Activated CD4-positive, alpha-beta T cell treated with anti-CD3 and anti-CD28 coated beads for 36 hours (primary cell): ENCODE measurements at regions of chr4 and their contacts with region 1.

Region 1: GRCh38 chr4:10116580-10117358 is at the start of gene WDR1:
- DNase-seq: peak; percentile 93
- ATAC-seq: peak; percentile 79
- H3K4me3 Mint-ChIP-seq: peak within 1 kb of the TSS; percentile 96
- H3K27ac Mint-ChIP-seq: peak within 1 kb of the TSS; percentile 100
- H3K4me1 Mint-ChIP-seq: peaks cover 73% of the 10 kb centered on the region
- H3K27me3 Mint-ChIP-seq: no peaks in the 10 kb centered on the region
- total RNA-seq, gene WDR1: 308 to 354 TPM

Region 2: DNA sequence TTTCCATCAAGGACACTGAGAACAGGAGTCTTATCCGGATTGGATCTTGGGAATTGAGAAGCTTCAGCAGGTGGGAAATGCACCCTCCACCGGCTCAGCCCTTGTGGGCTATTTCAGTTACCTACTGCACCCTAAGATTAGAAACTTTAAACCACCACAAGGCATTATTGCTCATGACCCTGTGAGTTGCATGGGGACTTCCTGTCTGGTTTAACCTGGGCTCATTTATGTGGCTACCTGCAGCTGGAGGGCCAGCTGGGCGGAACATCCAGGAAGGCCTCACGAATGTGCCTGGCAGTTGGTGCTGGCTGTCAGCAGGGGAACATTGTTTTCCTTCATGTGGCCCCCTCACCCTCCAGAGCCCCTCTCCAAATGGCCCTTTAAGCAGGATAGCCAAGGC is 508.5 kb before region 1 on chr4:
- CTCF ChIA-PET with region 1: no interaction called
- POLR2A ChIA-PET with region 1: no interaction called
- intact Hi-C with region 1: loop called in 1 of 2 experiments (anchors 5 kb)
- DNase-seq: no peak
- ATAC-seq: no peak
- H3K4me3 Mint-ChIP-seq: no peak overlapping the region
- H3K27ac Mint-ChIP-seq: no peak overlapping the region
- H3K4me1 Mint-ChIP-seq: peaks cover 39% of the 10 kb centered on the region
- H3K27me3 Mint-ChIP-seq: no peaks in the 10 kb centered on the region

Region 3: GRCh38 chr4:9691238-9692065 is 425.3 kb before region 1 on chr4:
- CTCF ChIA-PET with region 1: no interaction called
- POLR2A ChIA-PET with region 1: interaction called, 5 read pairs
- intact Hi-C with region 1: loop called in 1 of 2 experiments (anchors 1 kb)
- DNase-seq: peak; percentile 95
- ATAC-seq: peak; percentile 100
- H3K4me3 Mint-ChIP-seq: peak overlapping the region; percentile 76
- H3K27ac Mint-ChIP-seq: peak overlapping the region; percentile 76
- H3K4me1 Mint-ChIP-seq: peaks cover 23% of the 10 kb centered on the region
- H3K27me3 Mint-ChIP-seq: no peaks in the 10 kb centered on the region

Region 4: GRCh38 chr4:10096201-10096977 is 20.4 kb before region 1 on chr4:
- CTCF ChIA-PET with region 1: interaction called, 9 read pairs
- POLR2A ChIA-PET with region 1: interaction called, 59 read pairs
- intact Hi-C with region 1: loop called (anchors 1 kb)
- DNase-seq: peak; percentile 92
- ATAC-seq: peak; percentile 84
- H3K4me3 Mint-ChIP-seq: peak overlapping the region; percentile 7
- H3K27ac Mint-ChIP-seq: peak overlapping the region; percentile 92
- H3K4me1 Mint-ChIP-seq: peaks cover 97% of the 10 kb centered on the region
- H3K27me3 Mint-ChIP-seq: no peaks in the 10 kb centered on the region

Region 5: DNA sequence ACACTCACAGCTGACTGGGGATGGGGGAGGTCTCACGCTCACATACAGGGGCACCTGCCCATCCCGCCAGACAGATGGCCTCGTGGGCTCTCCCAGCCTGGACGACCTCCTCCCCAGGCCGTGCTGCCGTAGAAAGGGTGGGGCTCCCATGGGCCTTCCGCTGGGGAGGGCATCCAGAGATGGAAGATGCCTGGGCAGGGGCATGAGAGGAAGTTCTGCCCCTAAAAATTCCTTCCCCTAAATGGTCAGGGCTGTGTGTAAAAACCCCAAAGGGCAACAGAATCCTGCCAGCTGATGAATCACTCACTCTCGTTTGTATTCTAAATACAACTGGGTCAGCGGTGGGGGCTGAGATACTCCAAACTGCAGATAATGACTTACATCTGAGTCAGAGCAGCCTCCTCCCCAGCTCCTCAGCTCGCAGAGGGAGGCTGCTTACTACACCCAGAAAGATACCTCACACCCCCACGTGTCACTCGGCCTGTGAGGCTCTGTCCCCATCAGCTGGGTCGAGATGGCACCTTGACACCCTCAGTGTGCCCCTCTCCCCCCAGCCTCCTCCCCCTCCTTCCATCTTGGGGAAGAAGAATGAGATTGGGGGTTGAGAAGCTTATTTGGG is 10.2 kb before region 1 on chr4:
- CTCF ChIA-PET with region 1: interaction called, 6 read pairs
- POLR2A ChIA-PET with region 1: interaction called, 47 read pairs
- intact Hi-C with region 1: loop called (anchors 1 kb)
- DNase-seq: peak; percentile 91
- ATAC-seq: peak; percentile 92
- H3K4me3 Mint-ChIP-seq: peak overlapping the region; percentile 67
- H3K27ac Mint-ChIP-seq: peak overlapping the region; percentile 87
- H3K4me1 Mint-ChIP-seq: peaks cover 99% of the 10 kb centered on the region
- H3K27me3 Mint-ChIP-seq: no peaks in the 10 kb centered on the region

Region 6: GRCh38 chr4:10180927-10181782 is 64.4 kb after region 1 on chr4:
- CTCF ChIA-PET with region 1: interaction called, 5 read pairs
- POLR2A ChIA-PET with region 1: interaction called, 5 read pairs
- intact Hi-C with region 1: loop called (anchors 2 kb)
- DNase-seq: peak; percentile 62
- ATAC-seq: peak; percentile 97
- H3K4me3 Mint-ChIP-seq: peak overlapping the region; percentile 26
- H3K27ac Mint-ChIP-seq: peak overlapping the region; percentile 79
- H3K4me1 Mint-ChIP-seq: peaks cover 31% of the 10 kb centered on the region
- H3K27me3 Mint-ChIP-seq: no peaks in the 10 kb centered on the region